ENCODE measurements at regions of chr1 and their contacts with region 1.

Region 1: DNA sequence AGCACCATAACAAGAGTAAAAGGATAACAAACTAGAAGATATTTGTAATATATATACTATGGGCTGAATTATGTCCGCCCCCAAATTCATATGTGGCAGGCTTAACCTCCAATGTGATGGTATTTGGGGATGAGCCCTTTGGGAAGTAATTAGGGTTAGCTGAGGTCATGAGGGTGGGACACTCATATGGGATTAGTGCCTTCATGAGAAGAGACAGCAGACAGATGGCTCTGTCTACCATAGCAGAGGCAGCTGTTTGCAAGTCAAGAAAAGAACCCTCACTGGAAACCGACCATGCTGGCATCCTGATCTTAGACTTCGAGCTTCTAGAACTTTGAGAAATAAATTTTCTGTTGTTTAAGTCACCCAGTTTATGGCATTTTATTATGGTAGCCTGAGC is 303.6 kb downstream of the LMO4 start:
- DNase-seq: no peak
- ATAC-seq: no peak
- H3K4me3 ChIP-seq: no peak overlapping the region
- H3K27ac ChIP-seq: no peak overlapping the region
- H3K4me1 ChIP-seq: no peaks in the 10 kb centered on the region
- H3K27me3 ChIP-seq: no peaks in the 10 kb centered on the region
- CTCF ChIP-seq: no peak

Region 2: DNA sequence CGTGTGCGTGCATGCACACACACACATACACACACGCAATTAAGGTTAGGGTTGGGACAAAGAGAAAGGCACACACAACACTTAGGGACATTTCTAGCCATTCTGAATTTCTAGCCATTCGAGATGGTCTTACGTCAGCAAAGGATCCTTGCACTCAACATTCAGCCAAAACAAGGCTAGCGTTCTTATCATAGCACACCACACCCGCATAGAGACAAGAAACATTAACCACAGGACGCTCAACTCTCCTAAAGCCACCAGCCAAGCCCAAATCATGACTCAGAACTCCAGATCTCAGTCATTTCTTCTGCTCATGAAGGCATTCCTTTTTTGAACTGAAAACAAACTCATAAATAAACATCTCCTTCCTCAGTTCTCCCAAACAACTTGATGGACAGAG is 196.7 kb before region 1 on chr1:
- CTCF ChIA-PET with region 1: no interaction called
- POLR2A ChIA-PET with region 1: no interaction called
- in situ Hi-C with region 1: no loop called
- intact Hi-C with region 1: no loop called
- DNase-seq: no peak
- ATAC-seq: no peak
- H3K4me3 ChIP-seq: no peak overlapping the region
- H3K27ac ChIP-seq: no peak overlapping the region
- H3K4me1 ChIP-seq: no peaks in the 10 kb centered on the region
- H3K27me3 ChIP-seq: no peaks in the 10 kb centered on the region
- CTCF ChIP-seq: no peak

Region 3: GRCh38 chr1:87464022-87464490 is 168.2 kb before region 1 on chr1:
- CTCF ChIA-PET with region 1: no interaction called
- POLR2A ChIA-PET with region 1: no interaction called
- in situ Hi-C with region 1: no loop called
- intact Hi-C with region 1: no loop called
- DNase-seq: no peak
- ATAC-seq: no peak
- H3K4me3 ChIP-seq: no peak overlapping the region
- H3K27ac ChIP-seq: no peak overlapping the region
- H3K4me1 ChIP-seq: no peaks in the 10 kb centered on the region
- H3K27me3 ChIP-seq: no peaks in the 10 kb centered on the region
- CTCF ChIP-seq: no peak

Region 4: GRCh38 chr1:87669674-87670073 is 37.4 kb after region 1 on chr1:
- CTCF ChIA-PET with region 1: no interaction called
- POLR2A ChIA-PET with region 1: no interaction called
- in situ Hi-C with region 1: no loop called
- intact Hi-C with region 1: no loop called
- DNase-seq: no peak
- ATAC-seq: no peak
- H3K4me3 ChIP-seq: no peak overlapping the region
- H3K27ac ChIP-seq: no peak overlapping the region
- H3K4me1 ChIP-seq: no peaks in the 10 kb centered on the region
- H3K27me3 ChIP-seq: no peaks in the 10 kb centered on the region
- CTCF ChIP-seq: no peak

Region 5: DNA sequence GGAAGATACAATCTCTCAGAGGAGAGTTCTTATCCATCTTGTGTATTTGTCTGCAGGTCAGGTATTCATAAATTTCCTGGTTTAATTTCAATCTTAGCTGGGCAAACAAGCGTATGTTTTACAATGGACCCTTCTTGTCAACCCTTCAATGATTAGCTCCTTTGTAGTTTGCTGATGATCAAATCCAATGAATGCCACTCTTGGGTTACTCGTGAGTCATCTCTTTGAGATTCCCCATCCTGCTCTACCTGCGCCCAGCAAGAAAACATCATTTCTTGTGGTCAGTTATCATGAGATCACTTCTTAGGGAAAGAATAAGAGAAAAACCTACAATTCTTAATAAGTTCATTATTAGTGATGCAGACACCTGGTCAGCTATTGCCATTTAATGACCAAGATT is 479.6 kb after region 1 on chr1:
- CTCF ChIA-PET with region 1: no interaction called
- POLR2A ChIA-PET with region 1: interaction called, 10 read pairs
- in situ Hi-C with region 1: no loop called
- intact Hi-C with region 1: no loop called
- DNase-seq: no peak
- ATAC-seq: no peak
- H3K4me3 ChIP-seq: no peak overlapping the region
- H3K27ac ChIP-seq: no peak overlapping the region
- H3K4me1 ChIP-seq: no peaks in the 10 kb centered on the region
- H3K27me3 ChIP-seq: no peaks in the 10 kb centered on the region
- CTCF ChIP-seq: no peak